ENCODE measurements at regions of chr6 and their contacts with region 1.

Region 1: GRCh38 chr6:84220809-84221409 is 6.5 kb downstream of the CEP162 start:
- DNase-seq: peak in 1 of 2 donors; percentile 43
- ATAC-seq: no peak
- H3K4me3 ChIP-seq: no peak overlapping the region
- H3K4me3 Mint-ChIP-seq: no peak overlapping the region
- H3K27ac ChIP-seq: no peak overlapping the region
- H3K27ac Mint-ChIP-seq: no peak overlapping the region
- H3K4me1 ChIP-seq: no peaks in the 10 kb centered on the region
- H3K4me1 Mint-ChIP-seq: peaks cover 5 to 13% of the 10 kb centered on the region in 2 donors
- H3K27me3 ChIP-seq: no peaks in the 10 kb centered on the region
- H3K27me3 Mint-ChIP-seq: no peaks in the 10 kb centered on the region
- CTCF ChIP-seq: peak; percentile 46

Region 2: GRCh38 chr6:83884523-83884922 is 336.4 kb before region 1 on chr6:
- intact Hi-C with region 1: loop called (anchors 1 kb)
- DNase-seq: peak in 1 of 2 donors; percentile 66
- ATAC-seq: peak; percentile 66 to 92 (median 78)
- H3K4me3 ChIP-seq: no peak overlapping the region
- H3K4me3 Mint-ChIP-seq: no peak overlapping the region
- H3K27ac ChIP-seq: no peak overlapping the region
- H3K27ac Mint-ChIP-seq: no peak overlapping the region
- H3K4me1 ChIP-seq: no peaks in the 10 kb centered on the region
- H3K4me1 Mint-ChIP-seq: peaks cover 33% of the 10 kb centered on the region in 2 donors
- H3K27me3 ChIP-seq: no peaks in the 10 kb centered on the region
- H3K27me3 Mint-ChIP-seq: no peaks in the 10 kb centered on the region
- CTCF ChIP-seq: peak; percentile 75